B cell (primary cell): ENCODE measurements at regions of chr7 and their contacts with region 1.

Region 1: GRCh38 chr7:18530224-18531179 is 35.0 kb downstream of the HDAC9 start:
- DNase-seq: peak; percentile 76
- ATAC-seq: peak; percentile 79
- H3K4me3 ChIP-seq: peak overlapping the region in 3 of 5 experiments; percentile 9 to 39 (median 15)
- H3K4me3 Mint-ChIP-seq: peak overlapping the region; percentile 82
- H3K27ac ChIP-seq: peak overlapping the region; percentile 75 to 82
- H3K27ac Mint-ChIP-seq: peak overlapping the region; percentile 86
- H3K4me1 ChIP-seq: peaks cover 53 to 82% of the 10 kb centered on the region in 2 donors
- H3K4me1 Mint-ChIP-seq: peaks cover 73% of the 10 kb centered on the region
- H3K27me3 ChIP-seq: no peaks in the 10 kb centered on the region
- H3K27me3 Mint-ChIP-seq: no peaks in the 10 kb centered on the region
- CTCF ChIP-seq: no peak

Region 2: GRCh38 chr7:18503126-18503866 is 27.2 kb before region 1 on chr7:
- CTCF ChIA-PET with region 1: interaction called, 7 read pairs
- POLR2A ChIA-PET with region 1: interaction called, 4 read pairs
- intact Hi-C with region 1: loop called (anchors 2 kb)
- DNase-seq: peak; percentile 61
- ATAC-seq: no peak
- H3K4me3 ChIP-seq: peak overlapping the region in 1 of 5 experiments; percentile 24
- H3K4me3 Mint-ChIP-seq: peak overlapping the region; percentile 62
- H3K27ac ChIP-seq: peak overlapping the region; percentile 42 to 83
- H3K27ac Mint-ChIP-seq: peak overlapping the region; percentile 79
- H3K4me1 ChIP-seq: peaks cover 68 to 84% of the 10 kb centered on the region in 2 donors
- H3K4me1 Mint-ChIP-seq: peaks cover 82% of the 10 kb centered on the region
- H3K27me3 ChIP-seq: no peaks in the 10 kb centered on the region
- H3K27me3 Mint-ChIP-seq: no peaks in the 10 kb centered on the region
- CTCF ChIP-seq: no peak

Region 3: GRCh38 chr7:18541181-18541870 is 10.8 kb after region 1 on chr7:
- CTCF ChIA-PET with region 1: interaction called, 4 read pairs
- POLR2A ChIA-PET with region 1: interaction called, 5 read pairs
- intact Hi-C with region 1: loop called (anchors 1 kb)
- DNase-seq: no peak
- ATAC-seq: no peak
- H3K4me3 ChIP-seq: no peak overlapping the region
- H3K4me3 Mint-ChIP-seq: no peak overlapping the region
- H3K27ac ChIP-seq: no peak overlapping the region
- H3K27ac Mint-ChIP-seq: no peak overlapping the region
- H3K4me1 ChIP-seq: peaks cover 9 to 21% of the 10 kb centered on the region in 2 donors
- H3K4me1 Mint-ChIP-seq: peaks cover 51% of the 10 kb centered on the region
- H3K27me3 ChIP-seq: no peaks in the 10 kb centered on the region
- H3K27me3 Mint-ChIP-seq: no peaks in the 10 kb centered on the region
- CTCF ChIP-seq: no peak

Region 4: GRCh38 chr7:18570890-18571478 is 40.5 kb after region 1 on chr7:
- CTCF ChIA-PET with region 1: interaction called, 9 read pairs
- POLR2A ChIA-PET with region 1: interaction called, 8 read pairs
- intact Hi-C with region 1: loop called (anchors 1 kb)
- DNase-seq: no peak
- ATAC-seq: no peak
- H3K4me3 ChIP-seq: no peak overlapping the region
- H3K4me3 Mint-ChIP-seq: no peak overlapping the region
- H3K27ac ChIP-seq: peak overlapping the region in 1 of 2 donors; percentile 44
- H3K27ac Mint-ChIP-seq: peak overlapping the region; percentile 20
- H3K4me1 ChIP-seq: peaks cover 45 to 56% of the 10 kb centered on the region in 2 donors
- H3K4me1 Mint-ChIP-seq: peaks cover 62% of the 10 kb centered on the region
- H3K27me3 ChIP-seq: no peaks in the 10 kb centered on the region
- H3K27me3 Mint-ChIP-seq: no peaks in the 10 kb centered on the region
- CTCF ChIP-seq: no peak